ENCODE measurements at regions of chr2 and their contacts with region 1.

Region 1: DNA sequence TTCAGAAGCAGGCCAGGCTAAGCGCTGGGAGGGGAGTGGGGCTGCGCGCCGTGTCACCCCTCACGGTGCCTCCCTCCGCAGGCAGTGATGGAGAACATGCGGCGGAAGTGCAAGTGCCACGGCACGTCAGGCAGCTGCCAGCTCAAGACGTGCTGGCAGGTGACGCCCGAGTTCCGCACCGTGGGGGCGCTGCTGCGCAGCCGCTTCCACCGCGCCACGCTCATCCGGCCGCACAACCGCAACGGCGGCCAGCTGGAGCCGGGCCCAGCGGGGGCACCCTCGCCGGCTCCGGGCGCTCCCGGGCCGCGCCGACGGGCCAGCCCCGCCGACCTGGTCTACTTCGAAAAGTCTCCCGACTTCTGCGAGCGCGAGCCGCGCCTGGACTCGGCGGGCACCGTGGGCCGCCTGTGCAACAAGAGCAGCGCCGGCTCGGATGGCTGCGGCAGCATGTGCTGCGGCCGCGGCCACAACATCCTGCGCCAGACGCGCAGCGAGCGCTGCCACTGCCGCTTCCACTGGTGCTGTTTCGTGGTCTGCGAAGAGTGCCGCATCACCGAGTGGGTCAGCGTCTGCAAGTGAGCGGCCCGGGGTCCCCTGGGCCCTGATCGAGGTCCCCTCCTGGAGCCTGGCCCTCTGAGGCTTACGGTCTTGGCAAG is 12.2 kb downstream of the WNT10A start:
- DNase-seq: peak; percentile 89 to 96 (median 92)
- H3K4me3 ChIP-seq: peak overlapping the region; percentile 9 to 61
- H3K4me3 Mint-ChIP-seq: peak overlapping the region; percentile 76 to 87 (median 80)
- H3K27ac ChIP-seq: peak overlapping the region; percentile 93
- H3K27ac Mint-ChIP-seq: peak overlapping the region; percentile 94 to 99 (median 98)
- H3K4me1 ChIP-seq: peaks cover 66% of the 10 kb centered on the region
- H3K4me1 Mint-ChIP-seq: peaks cover 40 to 76% (median 50%) of the 10 kb centered on the region in 4 donors
- H3K27me3 ChIP-seq: no peaks in the 10 kb centered on the region
- H3K27me3 Mint-ChIP-seq: no peaks in the 10 kb centered on the region

Region 2: GRCh38 chr2:218286570-218287459 is 606.0 kb before region 1 on chr2:
- CTCF ChIA-PET with region 1: no interaction called
- POLR2A ChIA-PET with region 1: no interaction called
- intact Hi-C with region 1: loop called (anchors 5 kb)
- DNase-seq: peak; percentile 84 to 97 (median 87)
- H3K4me3 ChIP-seq: peak overlapping the region; percentile 53 to 86
- H3K4me3 Mint-ChIP-seq: peak overlapping the region; percentile 90 to 97 (median 91)
- H3K27ac ChIP-seq: peak overlapping the region; percentile 94
- H3K27ac Mint-ChIP-seq: peak overlapping the region; percentile 98 to 100 (median 99)
- H3K4me1 ChIP-seq: peaks cover 92% of the 10 kb centered on the region
- H3K4me1 Mint-ChIP-seq: peaks cover 55 to 95% (median 73%) of the 10 kb centered on the region in 4 donors
- H3K27me3 ChIP-seq: no peaks in the 10 kb centered on the region
- H3K27me3 Mint-ChIP-seq: no peaks in the 10 kb centered on the region

Region 3: GRCh38 chr2:218710687-218711549 is 181.9 kb before region 1 on chr2 and contains the start of gene TTLL4:
- CTCF ChIA-PET with region 1: interaction called, 13 read pairs
- POLR2A ChIA-PET with region 1: interaction called, 10 read pairs
- intact Hi-C with region 1: loop called (anchors 1 kb)
- DNase-seq: peak; percentile 98 to 99 (median 99)
- H3K4me3 ChIP-seq: peak within 1 kb of the TSS; percentile 55 to 78
- H3K4me3 Mint-ChIP-seq: peak within 1 kb of the TSS; percentile 88 to 98 (median 95)
- H3K27ac ChIP-seq: peak within 1 kb of the TSS; percentile 81
- H3K27ac Mint-ChIP-seq: peak within 1 kb of the TSS; percentile 79 to 96 (median 93)
- H3K4me1 ChIP-seq: peaks cover 16% of the 10 kb centered on the region
- H3K4me1 Mint-ChIP-seq: peaks cover 14 to 26% (median 18%) of the 10 kb centered on the region in 4 donors
- H3K27me3 ChIP-seq: no peaks in the 10 kb centered on the region
- H3K27me3 Mint-ChIP-seq: peaks cover 0 to under 1% of the 10 kb centered on the region in 2 donors
- total RNA-seq, gene TTLL4: 23.1 to 26.1 TPM

Region 4: GRCh38 chr2:218870984-218871344 is 21.9 kb before region 1 on chr2:
- CTCF ChIA-PET with region 1: interaction called, 1,167 read pairs
- POLR2A ChIA-PET with region 1: interaction called, 667 read pairs
- intact Hi-C with region 1: loop called (anchors 1 kb)
- DNase-seq: peak in 1 of 5 donors; percentile 32
- H3K4me3 ChIP-seq: peak overlapping the region in 1 of 2 donors; percentile 41
- H3K4me3 Mint-ChIP-seq: peak overlapping the region; percentile 64 to 81 (median 74)
- H3K27ac ChIP-seq: no peak overlapping the region
- H3K27ac Mint-ChIP-seq: no peak overlapping the region
- H3K4me1 ChIP-seq: peaks cover 31% of the 10 kb centered on the region
- H3K4me1 Mint-ChIP-seq: peaks cover 13 to 44% (median 20%) of the 10 kb centered on the region in 4 donors
- H3K27me3 ChIP-seq: peaks cover 28% of the 10 kb centered on the region
- H3K27me3 Mint-ChIP-seq: peaks cover 35 to 56% of the 10 kb centered on the region in 2 donors

Region 5: GRCh38 chr2:219142329-219142728 is 249.5 kb after region 1 on chr2:
- CTCF ChIA-PET with region 1: no interaction called
- POLR2A ChIA-PET with region 1: no interaction called
- intact Hi-C with region 1: no loop called
- DNase-seq: no peak
- H3K4me3 ChIP-seq: no peak overlapping the region
- H3K4me3 Mint-ChIP-seq: no peak overlapping the region
- H3K27ac ChIP-seq: no peak overlapping the region
- H3K27ac Mint-ChIP-seq: peak overlapping the region in 1 of 7 donors; percentile 60
- H3K4me1 ChIP-seq: no peaks in the 10 kb centered on the region
- H3K4me1 Mint-ChIP-seq: peaks cover 0 to 5% (median 1%) of the 10 kb centered on the region in 4 donors
- H3K27me3 ChIP-seq: no peaks in the 10 kb centered on the region
- H3K27me3 Mint-ChIP-seq: no peaks in the 10 kb centered on the region

Measured in CD4-positive, alpha-beta memory T cell (primary cell).